ENCODE measurements at regions of chr1 and their contacts with region 1.

Region 1: DNA sequence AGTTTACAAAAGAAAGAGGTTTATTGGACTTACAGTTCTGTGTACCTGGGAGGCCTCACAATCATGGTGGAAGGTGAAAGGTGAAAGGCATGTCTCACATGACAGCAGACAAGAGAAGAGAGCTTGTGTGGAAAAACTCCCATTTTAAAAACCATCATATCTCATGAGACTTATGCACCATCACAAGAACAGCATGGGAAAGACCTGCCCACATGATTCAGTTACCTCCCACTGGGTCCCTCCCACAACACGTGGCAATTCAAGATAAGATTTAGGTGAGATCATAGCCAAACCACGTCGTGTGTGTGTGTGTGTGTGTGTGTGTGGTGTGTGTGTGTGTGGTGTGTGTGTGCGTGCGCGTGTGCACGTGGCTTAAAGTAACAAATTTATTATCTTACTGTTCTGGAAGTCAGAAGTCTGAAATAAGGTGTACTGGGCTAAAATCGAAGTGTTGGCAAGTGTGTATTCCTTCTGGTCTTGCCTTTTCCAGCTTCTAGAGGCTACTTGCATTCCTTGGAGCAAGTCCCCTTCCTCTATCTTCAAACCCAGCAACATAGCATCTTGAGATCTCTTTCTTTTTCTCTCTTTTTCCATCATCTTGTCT is 48.1 kb upstream of the MPC2 start:
- DNase-seq: no peak
- H3K4me3 Mint-ChIP-seq: no peak overlapping the region
- H3K27ac Mint-ChIP-seq: no peak overlapping the region
- H3K4me1 Mint-ChIP-seq: no peaks in the 10 kb centered on the region
- H3K27me3 Mint-ChIP-seq: no peaks in the 10 kb centered on the region

Region 2: DNA sequence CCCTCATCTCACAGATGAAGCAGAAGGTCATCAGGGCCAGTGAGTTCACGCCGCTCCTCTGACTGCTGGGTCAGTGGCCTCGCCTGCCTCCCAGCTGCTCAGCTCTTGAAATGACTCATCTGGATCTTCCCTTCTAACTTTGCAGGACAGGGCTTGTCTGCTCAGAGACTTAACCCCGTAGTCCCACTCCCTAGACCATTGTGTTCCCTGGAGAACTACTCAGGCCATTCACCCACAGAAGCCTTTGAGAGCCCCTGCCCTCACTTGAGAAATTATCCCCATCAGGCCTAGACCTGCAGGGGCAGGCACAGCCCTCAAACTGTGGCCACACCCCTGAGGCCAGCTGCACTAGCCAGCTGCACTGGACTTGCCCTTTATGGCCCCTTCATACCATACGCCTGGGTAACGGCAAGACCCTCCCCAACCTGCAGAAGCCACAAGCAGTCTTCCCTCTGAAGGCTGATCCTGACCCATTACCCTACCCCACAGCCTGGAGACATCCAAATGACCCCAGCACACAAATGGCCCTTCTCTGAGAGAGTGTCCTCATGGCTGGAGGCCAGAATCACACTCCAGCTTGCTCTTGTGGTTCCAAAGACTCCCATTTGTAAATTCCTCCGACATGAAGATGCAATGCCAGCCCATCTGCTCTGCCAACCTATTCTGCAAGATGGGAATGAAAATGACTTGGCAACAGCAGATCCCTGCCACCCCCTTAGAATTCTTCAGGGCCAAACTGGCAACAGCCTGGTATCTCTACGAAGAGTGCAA is 321.8 kb before region 1 on chr1:
- CTCF ChIA-PET with region 1: no interaction called
- POLR2A ChIA-PET with region 1: no interaction called
- DNase-seq: no peak
- H3K4me3 Mint-ChIP-seq: no peak overlapping the region
- H3K27ac Mint-ChIP-seq: no peak overlapping the region
- H3K4me1 Mint-ChIP-seq: peaks cover 36% of the 10 kb centered on the region
- H3K27me3 Mint-ChIP-seq: no peaks in the 10 kb centered on the region

Region 3: DNA sequence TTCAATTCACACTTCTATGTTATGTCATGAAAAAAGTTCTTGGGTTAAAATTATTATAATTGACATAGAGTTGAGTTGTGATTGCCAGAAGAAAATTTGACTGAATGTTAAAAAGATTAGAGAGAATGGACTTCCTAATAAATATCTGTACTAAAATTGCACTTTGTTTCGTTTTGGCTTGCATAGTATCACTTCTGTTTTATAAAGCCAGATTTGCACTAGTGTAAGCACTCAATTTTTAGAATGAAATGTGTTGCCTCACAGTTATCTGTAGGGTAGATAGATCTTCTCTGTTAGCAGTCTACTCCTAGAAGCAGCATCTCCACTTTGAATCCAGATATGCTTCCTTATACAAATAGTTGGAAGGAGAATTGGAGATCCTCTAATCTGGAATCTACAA is 47.0 kb after region 1 on chr1:
- CTCF ChIA-PET with region 1: no interaction called
- POLR2A ChIA-PET with region 1: interaction called, 10 read pairs
- DNase-seq: no peak
- H3K4me3 Mint-ChIP-seq: no peak overlapping the region
- H3K27ac Mint-ChIP-seq: no peak overlapping the region
- H3K4me1 Mint-ChIP-seq: no peaks in the 10 kb centered on the region
- H3K27me3 Mint-ChIP-seq: no peaks in the 10 kb centered on the region

Region 4: DNA sequence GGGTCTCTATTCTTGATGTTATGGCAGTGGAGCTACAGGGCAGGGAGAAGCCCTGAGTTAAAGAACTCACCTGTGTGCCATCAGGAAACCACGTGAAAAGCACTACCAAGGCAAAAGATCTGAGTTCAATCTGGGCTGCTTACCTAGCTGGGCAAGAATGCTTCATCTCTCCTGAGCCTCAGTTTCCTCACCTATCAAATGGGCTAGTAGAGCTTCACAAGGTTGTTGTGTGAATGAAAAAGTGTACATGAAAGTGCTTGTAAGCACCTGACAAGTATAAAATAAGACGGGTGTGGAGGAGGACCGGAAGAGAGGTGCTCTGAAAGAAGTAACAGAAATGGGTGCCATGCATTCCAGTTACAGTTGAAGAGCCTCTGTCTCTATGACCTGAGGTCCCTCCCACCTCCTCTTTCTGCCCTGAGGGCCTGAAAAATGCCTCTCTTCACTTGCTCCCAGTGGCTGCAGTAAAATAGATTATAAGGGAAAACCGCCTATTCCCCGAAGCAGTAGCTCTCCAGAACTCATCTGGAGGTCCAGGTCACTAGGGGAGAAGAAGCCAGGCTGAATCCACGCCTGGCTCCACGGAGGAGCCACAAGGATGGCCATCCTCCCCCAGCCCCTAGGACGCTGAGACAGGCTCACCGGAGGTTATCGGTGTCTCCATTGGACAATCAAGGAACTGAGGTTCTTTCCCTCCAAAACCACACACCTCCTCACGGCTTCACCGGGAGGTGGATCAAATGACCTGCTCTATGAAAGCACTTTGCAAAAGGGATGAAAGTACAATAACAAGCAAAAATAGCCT is 150.3 kb after region 1 on chr1:
- CTCF ChIA-PET with region 1: no interaction called
- POLR2A ChIA-PET with region 1: no interaction called
- DNase-seq: no peak
- H3K4me3 Mint-ChIP-seq: peak overlapping the region; percentile 72
- H3K27ac Mint-ChIP-seq: no peak overlapping the region
- H3K4me1 Mint-ChIP-seq: peaks cover 20% of the 10 kb centered on the region
- H3K27me3 Mint-ChIP-seq: peaks cover 58% of the 10 kb centered on the region